ENCODE measurements at regions of chr18 and their contacts with region 1.

Region 1: GRCh38 chr18:21111341-21112139 is at the start of gene ROCK1:
- DNase-seq: peak; percentile 96
- ATAC-seq: peak; percentile 92
- H3K4me3 ChIP-seq: peak within 1 kb of the TSS; percentile 91
- H3K27ac ChIP-seq: peak within 1 kb of the TSS; percentile 99
- H3K4me1 ChIP-seq: peaks cover 7% of the 10 kb centered on the region
- H3K27me3 ChIP-seq: no peaks in the 10 kb centered on the region
- CTCF ChIP-seq: no peak
- POLR2A ChIP-seq: peak; percentile 79
- RAD21 ChIP-seq: no peak; the same call in 1 of the 2 replicates
- total RNA-seq, gene ROCK1: 17.0 and 33.6 TPM in 2 replicates

Region 2: DNA sequence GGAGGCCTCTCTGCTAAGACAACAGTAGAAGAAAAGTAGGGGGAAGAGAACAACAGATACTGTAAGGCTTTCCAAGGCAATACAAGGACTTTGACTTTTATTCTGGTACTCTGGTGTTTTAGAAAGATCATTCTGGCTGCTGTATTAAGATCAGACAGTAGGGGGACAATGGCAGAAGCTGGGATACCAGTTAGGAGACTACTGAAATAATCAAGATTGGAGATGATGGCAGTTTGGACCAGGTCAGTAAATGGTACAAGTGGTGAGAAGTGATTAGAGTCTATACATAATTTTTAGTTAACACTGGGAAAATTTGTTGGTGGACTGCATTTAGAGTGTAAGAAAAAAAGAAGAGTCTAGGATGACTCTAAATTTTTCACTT is 139.7 kb before region 1 on chr18:
- CTCF ChIA-PET with region 1: no interaction called
- POLR2A ChIA-PET with region 1: no interaction called
- dilution Hi-C with region 1: no loop called
- in situ Hi-C with region 1: no loop called
- intact Hi-C with region 1: loop called (anchors 5 kb)
- DNase-seq: peak; percentile 19
- ATAC-seq: peak; percentile 71
- H3K4me3 ChIP-seq: no peak overlapping the region
- H3K27ac ChIP-seq: no peak overlapping the region
- H3K4me1 ChIP-seq: no peaks in the 10 kb centered on the region
- H3K27me3 ChIP-seq: no peaks in the 10 kb centered on the region
- CTCF ChIP-seq: peak; percentile 50
- POLR2A ChIP-seq: no peak
- RAD21 ChIP-seq: peak; percentile 50

Region 3: DNA sequence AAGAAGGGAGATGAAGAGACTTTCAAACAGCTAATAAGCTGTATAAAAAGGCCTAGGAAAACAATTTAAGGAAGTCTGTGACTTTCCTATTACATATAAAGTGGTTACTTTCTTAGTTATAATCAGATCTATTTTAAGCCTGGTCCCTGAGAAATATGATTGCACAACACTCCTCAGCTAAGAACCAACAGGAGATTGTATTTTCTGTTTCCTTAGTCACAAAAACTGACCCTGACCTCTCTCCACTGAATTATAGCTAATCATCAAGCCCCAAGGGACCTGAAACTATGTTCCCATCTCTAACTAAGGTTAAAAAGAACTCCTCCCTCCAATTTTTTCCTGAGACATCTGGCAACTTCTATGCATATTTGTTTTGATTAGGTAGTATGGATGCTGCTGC is 106.8 kb before region 1 on chr18:
- CTCF ChIA-PET with region 1: no interaction called
- POLR2A ChIA-PET with region 1: interaction called, 5 read pairs
- dilution Hi-C with region 1: no loop called
- in situ Hi-C with region 1: no loop called
- intact Hi-C with region 1: loop called (anchors 5 kb)
- DNase-seq: peak; percentile 86
- ATAC-seq: peak; percentile 82
- H3K4me3 ChIP-seq: no peak overlapping the region
- H3K27ac ChIP-seq: no peak overlapping the region
- H3K4me1 ChIP-seq: no peaks in the 10 kb centered on the region; the same call in 1 of the 2 replicates
- H3K27me3 ChIP-seq: no peaks in the 10 kb centered on the region
- CTCF ChIP-seq: no peak
- POLR2A ChIP-seq: no peak
- RAD21 ChIP-seq: no peak

Region 4: DNA sequence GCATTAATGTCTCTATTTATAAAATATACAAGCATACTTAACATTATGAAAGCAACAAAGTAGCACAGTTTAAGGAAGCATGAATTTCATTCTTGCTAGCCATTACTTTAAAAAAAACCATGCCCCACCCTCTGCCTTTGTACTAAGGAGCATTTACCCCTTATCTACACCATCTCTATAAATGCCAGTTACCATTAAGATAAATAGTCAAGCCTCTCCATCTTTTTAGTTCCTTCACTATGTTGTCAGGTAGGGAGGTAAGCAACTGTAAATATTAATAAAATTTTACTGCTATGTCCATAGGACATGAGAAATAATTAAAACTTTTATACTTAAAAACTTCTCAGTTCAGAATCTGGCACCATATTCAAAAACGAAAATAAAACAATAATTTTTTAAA is 42.1 kb before region 1 on chr18:
- CTCF ChIA-PET with region 1: no interaction called
- POLR2A ChIA-PET with region 1: no interaction called
- dilution Hi-C with region 1: no loop called
- in situ Hi-C with region 1: no loop called
- intact Hi-C with region 1: loop called (anchors 5 kb)
- DNase-seq: no peak
- ATAC-seq: no peak
- H3K4me3 ChIP-seq: no peak overlapping the region
- H3K27ac ChIP-seq: no peak overlapping the region
- H3K4me1 ChIP-seq: peaks cover 3% of the 10 kb centered on the region; the same call in 1 of the 2 replicates
- H3K27me3 ChIP-seq: no peaks in the 10 kb centered on the region
- CTCF ChIP-seq: no peak
- POLR2A ChIP-seq: no peak
- RAD21 ChIP-seq: no peak

Region 5: GRCh38 chr18:21187886-21188285 is 76.3 kb after region 1 on chr18:
- CTCF ChIA-PET with region 1: no interaction called
- POLR2A ChIA-PET with region 1: no interaction called
- dilution Hi-C with region 1: no loop called
- in situ Hi-C with region 1: no loop called
- intact Hi-C with region 1: loop called (anchors 5 kb)
- DNase-seq: no peak
- ATAC-seq: no peak
- H3K4me3 ChIP-seq: no peak overlapping the region
- H3K27ac ChIP-seq: no peak overlapping the region
- H3K4me1 ChIP-seq: no peaks in the 10 kb centered on the region
- H3K27me3 ChIP-seq: peaks cover 10% of the 10 kb centered on the region; the same call in 1 of the 2 replicates
- CTCF ChIP-seq: no peak
- POLR2A ChIP-seq: no peak
- RAD21 ChIP-seq: no peak